Heart left ventricle (tissue), 16 donors: ENCODE measurements at regions of chr3 and their contacts with region 1.

Region 1: DNA sequence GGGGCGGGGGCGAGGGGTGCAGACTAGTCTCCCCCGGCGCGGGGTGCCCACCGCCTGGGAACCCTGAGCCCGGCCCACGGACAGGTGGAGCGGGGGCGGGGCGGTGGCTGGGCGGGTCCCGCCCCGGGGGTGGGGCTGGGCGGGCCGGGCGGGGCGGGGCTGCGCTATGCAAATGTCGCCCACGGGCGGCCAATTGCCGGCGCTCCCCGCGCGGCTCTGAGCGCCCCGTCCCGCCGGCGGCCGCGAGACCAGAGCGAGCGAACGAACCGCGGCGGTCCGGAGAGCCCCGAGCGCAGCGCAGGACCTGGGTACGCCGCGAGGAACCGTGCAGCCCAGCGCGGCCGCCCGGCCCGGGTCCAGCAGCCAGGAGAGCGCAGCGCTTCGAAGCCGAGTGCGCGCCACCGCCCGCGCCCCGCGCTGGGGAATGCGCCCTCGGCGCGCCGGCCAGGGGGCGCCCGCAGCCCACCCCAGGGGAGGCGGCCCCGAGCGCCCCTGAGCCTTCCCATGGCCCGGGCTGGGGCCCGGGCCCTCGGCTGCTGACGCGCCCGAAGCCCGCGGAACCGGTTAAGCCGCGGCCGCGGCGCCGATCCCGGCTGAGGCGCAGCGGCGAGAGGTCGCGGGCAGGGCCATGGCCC is at the start of gene SEMA3F:
- DNase-seq: peak; percentile 55 to 81 (median 67)
- ATAC-seq: peak; percentile 52 to 91 (median 75)
- H3K4me3 ChIP-seq: peak within 1 kb of the TSS; percentile 40 to 79 (median 62)
- H3K27ac ChIP-seq: peak within 1 kb of the TSS; percentile 61 to 92 (median 80)
- H3K4me1 ChIP-seq: peaks cover 0 to 51% (median 18%) of the 10 kb centered on the region in 12 donors
- H3K27me3 ChIP-seq: peaks cover 0 to 23% (median 0%) of the 10 kb centered on the region in 9 donors
- CTCF ChIP-seq: peak in 8 of 12 donors; percentile 19 to 52 (median 34)
- POLR2A ChIP-seq: peak in 1 of 2 donors; percentile 76
- total RNA-seq, gene SEMA3F: 6.1 to 94.1 (median 11.3) TPM

Region 2: DNA sequence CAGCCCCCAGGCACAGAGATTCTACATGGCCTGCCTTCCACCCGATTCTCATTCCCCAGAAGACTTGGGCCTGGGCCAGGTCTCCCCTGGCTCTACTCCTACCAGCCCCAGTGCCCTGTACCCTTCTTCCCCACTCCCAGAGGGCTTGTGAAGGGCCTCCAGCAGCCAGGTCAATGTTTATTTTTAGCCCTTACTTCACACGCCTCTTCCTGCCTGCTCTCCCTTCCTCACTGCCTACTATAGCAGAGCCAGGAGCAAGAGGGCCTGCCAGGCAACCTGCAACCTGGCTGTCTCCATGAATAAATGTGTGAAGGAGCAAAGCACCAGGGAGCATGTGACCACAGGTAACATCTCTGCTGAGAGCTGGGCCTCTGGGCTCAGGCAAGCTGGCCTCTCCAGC is 507.2 kb before region 1 on chr3:
- intact Hi-C with region 1: no loop called
- DNase-seq: peak; percentile 52 to 64 (median 55)
- ATAC-seq: peak; percentile 86 to 98 (median 96)
- H3K4me3 ChIP-seq: no peak overlapping the region
- H3K27ac ChIP-seq: peak overlapping the region in 9 of 12 donors; percentile 33 to 80 (median 69)
- H3K4me1 ChIP-seq: peaks cover 0 to 25% (median 11%) of the 10 kb centered on the region in 12 donors
- H3K27me3 ChIP-seq: no peaks in the 10 kb centered on the region
- CTCF ChIP-seq: no peak
- POLR2A ChIP-seq: no peak

Region 3: GRCh38 chr3:50121416-50122032 is 33.4 kb before region 1 on chr3:
- intact Hi-C with region 1: loop called in 2 of 10 experiments (anchors 2 kb)
- DNase-seq: peak; percentile 68 to 77 (median 72)
- ATAC-seq: peak; percentile 71 to 88 (median 84)
- H3K4me3 ChIP-seq: no peak overlapping the region
- H3K27ac ChIP-seq: no peak overlapping the region
- H3K4me1 ChIP-seq: peaks cover 0 to 22% (median 2%) of the 10 kb centered on the region in 12 donors
- H3K27me3 ChIP-seq: no peaks in the 10 kb centered on the region
- CTCF ChIP-seq: peak; percentile 76 to 89 (median 84)
- POLR2A ChIP-seq: peak in 1 of 2 donors; percentile 13

Region 4: GRCh38 chr3:50170689-50171088 is 15.7 kb after region 1 on chr3:
- intact Hi-C with region 1: loop called in 1 of 10 experiments (anchors 2 kb)
- DNase-seq: peak; percentile 69 to 86 (median 82)
- ATAC-seq: peak; percentile 57 to 82 (median 62)
- H3K4me3 ChIP-seq: no peak overlapping the region
- H3K27ac ChIP-seq: peak overlapping the region; percentile 47 to 92 (median 83)
- H3K4me1 ChIP-seq: peaks cover 21 to 74% (median 61%) of the 10 kb centered on the region in 12 donors
- H3K27me3 ChIP-seq: no peaks in the 10 kb centered on the region
- CTCF ChIP-seq: no peak
- POLR2A ChIP-seq: no peak

Region 5: GRCh38 chr3:50192689-50193141 is 37.8 kb after region 1 on chr3:
- intact Hi-C with region 1: loop called in 5 of 10 experiments (anchors 1 to 2 kb)
- DNase-seq: peak in 4 of 5 donors; percentile 44 to 64 (median 60)
- ATAC-seq: peak in 2 of 4 donors; percentile 17 to 28
- H3K4me3 ChIP-seq: no peak overlapping the region
- H3K27ac ChIP-seq: no peak overlapping the region
- H3K4me1 ChIP-seq: peaks cover 3 to 29% (median 14%) of the 10 kb centered on the region in 12 donors
- H3K27me3 ChIP-seq: peaks cover 12 to 35% (median 21%) of the 10 kb centered on the region in 9 donors
- CTCF ChIP-seq: peak; percentile 82 to 94 (median 88)
- POLR2A ChIP-seq: no peak

Region 6: GRCh38 chr3:50278868-50279224 is 123.9 kb after region 1 on chr3 and contains the start of gene LSMEM2:
- intact Hi-C with region 1: no loop called
- DNase-seq: peak in 4 of 5 donors; percentile 71 to 85 (median 78)
- ATAC-seq: peak; percentile 85 to 94 (median 88)
- H3K4me3 ChIP-seq: peak within 1 kb of the TSS in 11 of 12 donors; percentile 9 to 53 (median 43)
- H3K27ac ChIP-seq: peak within 1 kb of the TSS; percentile 36 to 94 (median 84)
- H3K4me1 ChIP-seq: peaks cover 0 to 47% (median 18%) of the 10 kb centered on the region in 12 donors
- H3K27me3 ChIP-seq: peaks cover 0 to 32% (median 6%) of the 10 kb centered on the region in 9 donors
- CTCF ChIP-seq: no peak
- POLR2A ChIP-seq: peak in 1 of 2 donors; percentile 23
- total RNA-seq, gene LSMEM2: 8.8 to 68.3 (median 31.5) TPM